ENCODE measurements at regions of chr17 and their contacts with region 1.

Region 1: DNA sequence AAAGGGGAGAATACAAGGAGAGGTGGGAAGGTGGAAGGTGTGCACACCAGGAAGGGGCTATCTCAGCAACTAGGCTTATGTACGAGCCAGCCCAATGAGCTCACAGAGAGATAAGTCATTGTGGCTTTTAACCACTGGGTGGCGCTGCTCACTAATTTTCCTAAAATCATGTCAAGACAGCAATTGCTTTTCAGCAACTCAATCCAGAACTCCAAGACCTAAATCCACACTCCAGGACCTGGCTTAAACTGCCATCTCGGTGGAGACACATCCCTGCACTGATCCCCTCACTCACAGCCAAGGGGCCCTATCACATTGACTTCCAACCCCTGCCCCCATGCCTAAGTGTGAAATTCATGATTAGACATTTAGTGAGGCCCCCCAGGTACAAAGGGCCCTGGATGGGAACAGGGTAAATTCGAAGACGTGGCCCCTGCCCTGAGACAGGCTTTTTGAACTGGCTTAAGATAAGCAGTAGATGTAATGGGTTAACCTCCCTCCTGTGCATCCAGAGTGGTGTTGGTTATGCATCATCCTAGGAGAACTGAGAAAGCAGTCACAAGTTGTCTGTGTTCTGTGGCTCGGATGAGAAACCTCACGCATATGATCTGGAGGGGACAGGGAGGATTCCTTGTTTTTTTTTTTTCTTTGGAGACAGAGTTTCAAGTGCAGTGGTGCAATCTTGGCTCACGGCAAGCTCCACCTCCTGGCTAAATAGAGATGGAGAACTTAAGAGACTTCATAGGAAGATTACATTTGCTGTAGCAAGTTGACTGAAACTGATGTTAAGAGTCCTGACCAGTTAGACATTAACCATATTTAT is 11.5 kb downstream of the CCL16 start:
- DNase-seq: peak in 1 of 2 donors; percentile 85
- H3K4me3 ChIP-seq: no peak overlapping the region
- H3K27ac ChIP-seq: no peak overlapping the region
- H3K4me1 ChIP-seq: no peaks in the 10 kb centered on the region
- H3K27me3 ChIP-seq: no peaks in the 10 kb centered on the region
- CTCF ChIP-seq: peak; percentile 68 to 80 (median 77)
- POLR2A ChIP-seq: no peak

Region 2: GRCh38 chr17:36148559-36149295 is 179.0 kb after region 1 on chr17:
- intact Hi-C with region 1: loop called (anchors 10 kb)
- DNase-seq: no peak
- H3K4me3 ChIP-seq: no peak overlapping the region
- H3K27ac ChIP-seq: no peak overlapping the region
- H3K4me1 ChIP-seq: no peaks in the 10 kb centered on the region
- H3K27me3 ChIP-seq: no peaks in the 10 kb centered on the region
- CTCF ChIP-seq: peak; percentile 80 to 88 (median 85)
- POLR2A ChIP-seq: no peak

Region 3: DNA sequence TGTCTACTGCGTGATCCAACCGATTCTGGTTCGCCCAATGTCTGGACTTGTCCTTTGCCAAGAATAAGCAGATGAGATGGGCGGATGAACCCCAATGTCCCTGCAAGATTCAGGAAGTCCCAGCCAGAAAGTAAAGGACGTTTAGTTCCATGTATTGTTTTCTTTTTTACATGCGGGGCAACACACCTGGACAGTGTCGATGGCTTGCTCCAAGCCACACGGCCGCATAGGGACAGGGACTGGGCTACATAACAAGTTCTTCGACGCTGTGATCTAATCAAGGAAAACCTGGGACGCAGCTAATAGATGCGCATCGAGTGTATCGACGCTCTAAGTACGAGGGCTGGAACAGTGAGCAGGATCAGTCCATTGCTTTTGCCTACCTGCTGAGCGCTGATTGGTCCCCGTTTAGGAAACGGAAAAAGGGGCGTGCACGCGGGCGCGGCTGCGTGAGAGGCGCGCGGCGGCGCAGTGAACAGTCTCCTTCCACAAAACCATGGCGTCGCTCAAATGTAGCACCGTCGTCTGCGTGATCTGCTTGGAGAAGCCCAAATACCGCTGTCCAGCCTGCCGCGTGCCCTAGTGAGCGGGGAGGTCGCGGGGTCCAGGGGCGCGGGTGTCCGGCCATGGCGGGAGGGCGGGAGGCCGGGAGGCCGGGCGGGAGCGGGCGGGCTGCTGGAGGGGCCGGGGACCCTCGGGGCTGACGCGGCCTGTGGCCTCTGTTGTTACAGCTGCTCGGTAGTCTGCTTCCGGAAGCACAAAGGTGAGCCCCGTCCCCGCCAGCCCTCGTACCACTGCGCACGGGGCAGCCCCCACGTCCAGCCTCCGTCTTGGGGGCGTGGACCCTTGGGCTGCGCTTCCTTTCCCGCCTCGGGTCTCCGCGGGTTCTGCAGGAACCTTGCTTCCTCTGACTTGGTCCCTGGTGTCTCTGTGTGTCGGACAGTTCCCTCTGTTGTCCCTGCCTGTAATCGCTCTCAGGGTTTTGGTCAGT is 516.7 kb after region 1 on chr17 and contains the start of gene ZNHIT3:
- intact Hi-C with region 1: loop called (anchors 10 kb)
- DNase-seq: peak in 1 of 2 donors; percentile 95
- H3K4me3 ChIP-seq: peak within 1 kb of the TSS; percentile 94 to 97
- H3K27ac ChIP-seq: peak within 1 kb of the TSS; percentile 81
- H3K4me1 ChIP-seq: peaks cover 48% of the 10 kb centered on the region
- H3K27me3 ChIP-seq: no peaks in the 10 kb centered on the region
- CTCF ChIP-seq: peak in 1 of 3 experiments; percentile 6
- POLR2A ChIP-seq: no peak
- total RNA-seq, gene ZNHIT3: 13.5 TPM